ENCODE measurements at regions of chr6 and their contacts with region 1.

Region 1: GRCh38 chr6:2028457-2029038 is 216.9 kb downstream of the GMDS start:
- DNase-seq: no peak
- ATAC-seq: peak; percentile 18

Region 2: GRCh38 chr6:2055911-2056310 is 27.4 kb after region 1 on chr6:
- intact Hi-C with region 1: loop called (anchors 2 kb)
- DNase-seq: no peak
- ATAC-seq: no peak

Region 3: DNA sequence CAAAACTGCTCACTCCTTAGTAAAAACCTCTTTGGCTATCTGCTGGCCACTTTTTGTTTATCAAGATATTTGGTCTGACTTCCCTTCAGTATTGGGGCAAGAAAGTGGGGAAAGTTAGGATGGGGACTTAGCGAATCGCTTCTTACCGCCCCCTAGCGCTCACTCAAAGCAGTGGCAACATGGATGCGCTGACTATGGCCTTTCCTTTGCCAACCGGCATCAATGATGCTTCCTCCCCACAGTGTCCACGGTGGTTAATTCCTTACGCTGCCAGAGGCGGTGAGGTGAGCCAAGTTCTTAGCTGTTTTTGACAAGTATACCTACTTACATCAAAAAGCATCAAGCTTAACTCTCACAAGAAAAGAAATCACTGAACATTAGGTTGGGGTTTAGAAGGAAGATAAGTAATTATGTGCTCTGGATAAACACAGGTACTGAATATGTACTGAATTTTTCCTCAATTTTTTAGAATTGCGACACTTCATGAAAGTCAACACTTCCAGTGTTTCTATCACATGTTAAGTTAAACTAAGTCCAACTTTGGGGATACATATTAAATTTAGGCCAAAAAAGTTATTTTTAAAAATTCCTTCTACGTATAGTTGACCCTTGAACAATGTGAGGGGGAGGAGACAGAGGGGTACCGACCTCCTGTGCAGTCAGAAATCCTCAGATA is 130.2 kb after region 1 on chr6:
- intact Hi-C with region 1: no loop called
- DNase-seq: no peak
- ATAC-seq: no peak